Activated CD4-positive, alpha-beta T cell treated with anti-CD3 and anti-CD28 coated beads for 36 hours (primary cell): ENCODE measurements at regions of chr1 and their contacts with region 1.

Region 1: GRCh38 chr1:246497331-246497915 is 9.7 kb downstream of the SMYD3 start:
- DNase-seq: no peak
- ATAC-seq: peak; percentile 78
- H3K4me3 Mint-ChIP-seq: no peak overlapping the region
- H3K27ac Mint-ChIP-seq: no peak overlapping the region
- H3K4me1 Mint-ChIP-seq: peaks cover 10% of the 10 kb centered on the region
- H3K27me3 Mint-ChIP-seq: no peaks in the 10 kb centered on the region

Region 2: GRCh38 chr1:246139745-246140182 is 357.7 kb before region 1 on chr1:
- CTCF ChIA-PET with region 1: no interaction called
- POLR2A ChIA-PET with region 1: no interaction called
- intact Hi-C with region 1: loop called in 1 of 2 experiments (anchors 5 kb)
- DNase-seq: no peak
- ATAC-seq: peak; percentile 87
- H3K4me3 Mint-ChIP-seq: no peak overlapping the region
- H3K27ac Mint-ChIP-seq: no peak overlapping the region
- H3K4me1 Mint-ChIP-seq: peaks cover 8% of the 10 kb centered on the region
- H3K27me3 Mint-ChIP-seq: no peaks in the 10 kb centered on the region

Region 3: GRCh38 chr1:246753670-246754535 is 256.5 kb after region 1 on chr1:
- CTCF ChIA-PET with region 1: interaction called, 5 read pairs
- POLR2A ChIA-PET with region 1: no interaction called
- intact Hi-C with region 1: loop called (anchors 1 kb)
- DNase-seq: peak; percentile 78
- ATAC-seq: peak; percentile 91
- H3K4me3 Mint-ChIP-seq: no peak overlapping the region
- H3K27ac Mint-ChIP-seq: no peak overlapping the region
- H3K4me1 Mint-ChIP-seq: no peaks in the 10 kb centered on the region
- H3K27me3 Mint-ChIP-seq: no peaks in the 10 kb centered on the region